Activated CD8-positive, alpha-beta T cell treated with anti-CD3 and anti-CD28 coated beads, Interleukin-2, amount 10 ng/mL, durations not matched to agents 7 days and 5 days (primary cell): ENCODE measurements at regions of chr14 and their contacts with region 1.

Region 1: DNA sequence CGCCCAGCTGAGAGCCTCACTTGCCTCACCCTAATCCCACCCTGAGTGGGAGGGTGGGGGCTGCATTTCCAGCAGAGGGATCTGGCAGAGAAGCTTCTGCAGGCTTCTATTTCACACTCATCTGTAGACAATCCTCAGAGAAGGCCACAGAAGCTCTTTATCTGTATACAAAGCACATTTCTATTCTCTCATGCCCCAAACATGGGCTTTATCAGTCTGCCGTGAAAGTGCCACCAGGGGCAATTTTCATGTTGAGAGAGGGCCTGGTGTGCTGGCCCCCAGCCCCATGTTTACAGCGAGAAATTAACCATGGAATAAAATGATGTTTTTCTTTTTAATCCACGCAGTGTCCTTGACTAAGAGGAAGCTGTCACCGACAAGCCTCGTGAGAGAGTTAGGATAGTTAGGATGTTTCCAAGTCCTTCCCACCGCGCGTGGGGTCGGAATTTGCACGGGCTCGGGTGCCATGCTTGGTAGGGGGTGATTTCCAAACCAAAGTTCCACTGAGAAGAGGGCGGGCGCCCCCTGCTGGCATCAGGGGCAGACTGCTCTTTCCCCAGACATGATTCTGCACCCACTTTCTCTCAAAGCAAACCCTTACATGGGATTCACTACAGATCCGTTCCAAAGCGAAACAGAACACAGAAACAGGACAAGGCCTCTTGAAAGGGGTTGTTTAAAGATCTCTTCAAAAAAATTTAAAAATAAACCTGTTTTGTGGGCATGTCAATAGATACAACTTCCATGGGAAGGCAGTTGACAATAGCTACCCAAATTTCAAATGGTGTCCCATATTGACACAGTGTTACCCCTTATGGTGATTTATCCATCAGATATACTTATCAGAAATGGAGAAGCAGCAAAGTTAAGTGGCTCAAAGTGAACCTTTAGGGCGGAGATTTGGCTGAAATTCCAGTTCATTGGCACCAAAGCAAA is 19.4 kb downstream of the BDKRB1 start:
- DNase-seq: peak; percentile 66
- ATAC-seq: peak; percentile 57
- H3K4me3 Mint-ChIP-seq: no peak overlapping the region
- H3K27ac Mint-ChIP-seq: no peak overlapping the region
- H3K4me1 Mint-ChIP-seq: no peaks in the 10 kb centered on the region
- H3K27me3 Mint-ChIP-seq: no peaks in the 10 kb centered on the region

Region 2: DNA sequence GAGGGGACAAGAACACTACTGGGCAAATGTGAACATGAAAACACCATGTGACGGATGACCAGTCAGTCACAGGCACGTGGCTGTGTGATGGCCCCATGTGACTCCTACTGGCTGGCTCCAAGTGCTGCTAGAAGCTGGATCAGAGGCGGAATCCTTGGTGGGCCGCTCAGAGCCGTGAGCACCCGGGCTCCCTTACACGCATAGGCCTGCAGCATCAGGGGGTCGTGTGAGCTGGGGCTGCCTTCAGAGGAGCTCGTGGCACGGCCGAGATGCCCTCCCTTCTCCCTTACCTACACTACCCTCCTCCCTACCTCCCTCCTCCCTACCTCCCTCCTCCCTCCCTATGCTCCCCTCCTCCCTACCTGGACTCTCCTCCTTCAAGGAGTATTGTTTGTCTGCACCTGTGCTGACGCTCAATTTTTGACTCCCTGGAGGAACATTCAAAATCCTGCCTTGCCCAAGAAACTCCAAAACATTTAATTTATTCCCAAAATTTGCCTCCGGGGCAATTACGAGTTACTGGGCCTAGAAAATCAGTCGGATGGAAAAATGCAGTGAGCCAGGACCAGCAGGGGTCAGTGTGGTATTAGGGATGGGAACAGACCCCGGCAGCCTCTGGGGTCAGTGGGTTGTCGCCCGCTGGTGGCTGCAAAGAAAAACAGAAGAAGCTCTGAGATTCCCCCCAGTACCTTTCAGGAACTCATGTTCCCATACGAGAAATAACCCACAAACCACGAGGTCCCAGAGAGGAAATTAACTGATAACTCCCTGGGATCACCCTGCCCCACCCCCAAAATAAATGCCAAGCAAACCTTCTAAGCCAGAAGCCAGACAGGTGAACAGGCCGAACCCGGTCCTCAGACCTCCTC is 175.1 kb before region 1 on chr14:
- CTCF ChIA-PET with region 1: interaction called, 32 read pairs
- POLR2A ChIA-PET with region 1: no interaction called
- DNase-seq: peak; percentile 64
- ATAC-seq: peak; percentile 60
- H3K4me3 Mint-ChIP-seq: no peak overlapping the region
- H3K27ac Mint-ChIP-seq: no peak overlapping the region
- H3K4me1 Mint-ChIP-seq: no peaks in the 10 kb centered on the region
- H3K27me3 Mint-ChIP-seq: no peaks in the 10 kb centered on the region

Region 3: DNA sequence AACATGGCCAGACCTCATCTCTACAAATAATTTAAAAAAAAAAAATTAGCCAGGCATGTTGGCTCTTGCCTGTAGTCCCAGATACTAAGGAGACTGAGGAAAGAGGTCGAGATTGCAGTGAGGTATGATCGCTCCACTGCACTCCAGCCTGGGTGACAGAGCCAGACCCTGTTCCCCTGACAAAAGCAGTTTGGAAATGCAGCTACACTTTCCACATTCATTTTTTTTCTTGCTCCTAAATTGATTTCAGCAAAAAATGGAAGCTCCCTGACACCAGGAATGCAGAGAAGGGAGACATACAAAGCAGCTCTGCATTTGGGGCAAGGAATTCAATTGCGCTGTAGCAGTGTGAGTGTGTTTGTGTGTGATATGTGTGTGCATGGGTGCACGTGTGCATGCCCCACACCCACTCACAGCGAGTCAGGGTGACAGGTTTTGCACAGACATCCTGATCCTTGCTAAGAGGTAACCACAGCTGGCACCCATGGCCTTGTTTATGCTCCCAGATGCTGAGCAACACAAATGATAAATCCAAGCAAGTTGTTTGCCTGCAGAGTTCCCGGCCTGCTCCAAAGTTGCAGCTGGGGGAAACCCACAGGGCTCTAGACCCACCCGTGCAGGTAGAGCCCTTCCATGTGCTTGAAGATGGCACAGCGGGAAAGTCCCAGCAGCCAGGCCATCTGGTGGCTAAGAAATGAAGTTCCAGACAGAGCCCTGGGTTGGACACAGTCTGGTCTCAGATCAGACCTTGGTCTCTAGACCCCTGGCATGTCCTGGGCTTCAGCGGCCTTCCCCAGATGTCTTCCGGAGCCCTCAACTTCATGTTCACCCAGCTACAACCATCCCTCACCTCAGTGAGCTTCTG is 96.8 kb before region 1 on chr14:
- CTCF ChIA-PET with region 1: no interaction called
- POLR2A ChIA-PET with region 1: no interaction called
- DNase-seq: no peak
- ATAC-seq: no peak
- H3K4me3 Mint-ChIP-seq: no peak overlapping the region
- H3K27ac Mint-ChIP-seq: no peak overlapping the region
- H3K4me1 Mint-ChIP-seq: no peaks in the 10 kb centered on the region
- H3K27me3 Mint-ChIP-seq: peaks cover 4% of the 10 kb centered on the region